ENCODE measurements at regions of chr5 and their contacts with region 1.

Region 1: DNA sequence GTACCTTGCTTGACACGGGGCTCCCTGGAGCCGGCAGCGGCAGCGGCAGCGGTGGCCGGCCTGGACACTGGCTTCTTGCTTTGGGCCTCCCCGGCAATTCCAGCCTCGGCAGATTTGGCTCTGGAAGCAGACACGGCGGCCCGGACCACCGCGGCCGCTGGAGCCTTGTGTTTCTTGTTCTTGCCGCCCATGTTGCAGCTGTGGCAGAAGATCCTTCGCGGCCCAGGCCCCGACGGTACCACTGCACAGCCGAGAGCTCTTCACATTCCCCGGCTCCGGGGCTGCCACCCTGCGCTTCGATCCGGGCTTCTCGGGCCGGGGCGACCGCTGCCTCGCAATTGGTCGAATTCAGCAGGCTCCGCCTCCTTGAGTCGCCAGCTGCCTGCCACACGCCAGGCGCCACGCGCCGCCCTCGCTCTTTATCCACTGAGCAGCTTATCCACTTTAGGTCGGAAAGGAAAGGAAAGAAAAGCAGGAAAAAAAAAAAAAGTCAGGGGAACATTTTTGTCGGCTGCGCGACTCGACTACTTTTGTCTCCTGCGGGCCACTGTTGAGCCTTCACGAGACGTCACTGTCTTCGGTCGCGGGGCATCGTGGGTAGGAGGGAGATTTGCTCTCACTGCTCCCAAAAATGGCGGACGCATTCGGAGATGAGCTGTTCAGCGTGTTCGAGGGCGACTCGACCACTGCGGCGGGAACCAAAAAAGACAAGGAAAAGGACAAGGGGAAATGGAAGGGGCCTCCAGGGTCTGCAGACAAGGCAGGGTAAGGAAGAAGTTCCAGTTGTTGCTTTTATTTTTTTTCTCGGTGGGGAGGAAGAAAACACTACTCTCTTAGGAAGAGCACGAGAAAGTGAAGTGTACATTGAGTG is at the starts of genes DHX29 and MTREX:
- DNase-seq: peak; percentile 93
- H3K27ac ChIP-seq: peak within 1 kb of the TSS; percentile 98
- CTCF ChIP-seq: no peak

Region 2: GRCh38 chr5:55921617-55922016 is 614.0 kb after region 1 on chr5:
- CTCF ChIA-PET with region 1: interaction called, 11 read pairs
- POLR2A ChIA-PET with region 1: no interaction called
- DNase-seq: no peak
- H3K27ac ChIP-seq: no peak overlapping the region
- CTCF ChIP-seq: no peak